Heart left ventricle (tissue), 16 donors: ENCODE measurements at regions of chrX and their contacts with region 1.

Region 1: GRCh38 chrX:129493643-129494042 is 29.6 kb downstream of the SMARCA1 start:
- DNase-seq: no peak
- ATAC-seq: no peak
- H3K4me3 ChIP-seq: no peak overlapping the region
- H3K27ac ChIP-seq: no peak overlapping the region
- H3K4me1 ChIP-seq: no peaks in the 10 kb centered on the region
- H3K27me3 ChIP-seq: no peaks in the 10 kb centered on the region
- CTCF ChIP-seq: no peak
- POLR2A ChIP-seq: no peak

Region 2: GRCh38 chrX:129510331-129510730 is 16.7 kb after region 1 on chrX:
- intact Hi-C with region 1: loop called in 1 of 10 experiments (anchors 2 kb)
- DNase-seq: no peak
- ATAC-seq: no peak
- H3K4me3 ChIP-seq: no peak overlapping the region
- H3K27ac ChIP-seq: no peak overlapping the region
- H3K4me1 ChIP-seq: no peaks in the 10 kb centered on the region
- H3K27me3 ChIP-seq: no peaks in the 10 kb centered on the region
- CTCF ChIP-seq: no peak
- POLR2A ChIP-seq: no peak